T-cell (primary cell): ENCODE measurements at regions of chr3 and their contacts with region 1.

Region 1: DNA sequence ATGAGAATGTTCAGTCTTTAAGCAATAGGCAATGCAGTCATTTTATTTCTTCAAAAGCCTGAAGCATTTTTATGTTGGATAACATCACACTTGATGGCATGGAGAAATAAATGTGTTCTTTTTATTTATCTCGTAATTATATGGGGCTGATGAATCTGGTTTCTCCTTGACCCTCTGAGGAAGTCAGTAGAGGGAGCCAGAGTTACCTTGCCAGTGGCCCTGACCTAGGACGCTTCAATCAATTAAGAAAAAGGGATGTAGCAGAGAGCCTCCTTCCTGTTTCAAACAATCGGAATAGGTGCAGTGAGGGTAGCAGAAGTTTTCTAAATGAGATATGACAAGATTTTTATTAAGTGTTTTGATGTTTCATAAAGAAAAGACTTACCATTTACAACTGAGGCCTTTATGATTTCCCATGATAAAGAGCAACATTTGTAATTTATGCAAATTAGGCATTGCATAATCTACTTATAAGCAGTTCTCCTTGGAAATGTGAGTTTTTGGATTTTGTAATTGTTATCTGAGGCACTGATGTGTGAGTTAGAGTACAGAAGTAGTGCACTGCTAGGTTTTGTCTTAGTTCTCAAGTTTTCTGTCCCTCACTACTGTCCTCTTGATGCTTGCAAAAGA is 129.1 kb downstream of the RAP2B start:
- DNase-seq: peak in 1 of 35 experiments; percentile 50
- ATAC-seq: peak in 2 of 4 experiments; percentile 58 to 77
- H3K4me3 ChIP-seq: no peak overlapping the region
- H3K4me3 Mint-ChIP-seq: no peak overlapping the region
- H3K27ac ChIP-seq: no peak overlapping the region
- H3K27ac Mint-ChIP-seq: no peak overlapping the region
- H3K4me1 ChIP-seq: peaks cover 4 to 10% of the 10 kb centered on the region in 2 experiments
- H3K4me1 Mint-ChIP-seq: peaks cover 40 to 51% (median 45%) of the 10 kb centered on the region in 3 donors
- H3K27me3 ChIP-seq: no peaks in the 10 kb centered on the region
- H3K27me3 Mint-ChIP-seq: no peaks in the 10 kb centered on the region

Region 2: GRCh38 chr3:152969561-152970240 is 321.5 kb before region 1 on chr3:
- CTCF ChIA-PET with region 1: no interaction called
- POLR2A ChIA-PET with region 1: interaction called in 1 of 2 experiments, 12 read pairs
- DNase-seq: no peak
- ATAC-seq: no peak
- H3K4me3 ChIP-seq: no peak overlapping the region
- H3K4me3 Mint-ChIP-seq: no peak overlapping the region
- H3K27ac ChIP-seq: no peak overlapping the region
- H3K27ac Mint-ChIP-seq: no peak overlapping the region
- H3K4me1 ChIP-seq: no peaks in the 10 kb centered on the region
- H3K4me1 Mint-ChIP-seq: no peaks in the 10 kb centered on the region
- H3K27me3 ChIP-seq: no peaks in the 10 kb centered on the region
- H3K27me3 Mint-ChIP-seq: peaks cover 7 to 12% of the 10 kb centered on the region in 2 donors

Region 3: GRCh38 chr3:153161138-153161713 is 129.9 kb before region 1 on chr3:
- CTCF ChIA-PET with region 1: interaction called, 7 to 33 read pairs
- POLR2A ChIA-PET with region 1: no interaction called
- DNase-seq: peak; percentile 71 to 95 (median 90)
- ATAC-seq: peak; percentile 75 to 84 (median 80)
- H3K4me3 ChIP-seq: peak overlapping the region; percentile 70 to 88
- H3K4me3 Mint-ChIP-seq: peak overlapping the region; percentile 96 to 99 (median 98)
- H3K27ac ChIP-seq: peak overlapping the region; percentile 77
- H3K27ac Mint-ChIP-seq: peak overlapping the region; percentile 96
- H3K4me1 ChIP-seq: peaks cover 11 to 29% of the 10 kb centered on the region in 2 experiments
- H3K4me1 Mint-ChIP-seq: peaks cover 31 to 38% (median 37%) of the 10 kb centered on the region in 3 donors
- H3K27me3 ChIP-seq: no peaks in the 10 kb centered on the region
- H3K27me3 Mint-ChIP-seq: no peaks in the 10 kb centered on the region

Region 4: DNA sequence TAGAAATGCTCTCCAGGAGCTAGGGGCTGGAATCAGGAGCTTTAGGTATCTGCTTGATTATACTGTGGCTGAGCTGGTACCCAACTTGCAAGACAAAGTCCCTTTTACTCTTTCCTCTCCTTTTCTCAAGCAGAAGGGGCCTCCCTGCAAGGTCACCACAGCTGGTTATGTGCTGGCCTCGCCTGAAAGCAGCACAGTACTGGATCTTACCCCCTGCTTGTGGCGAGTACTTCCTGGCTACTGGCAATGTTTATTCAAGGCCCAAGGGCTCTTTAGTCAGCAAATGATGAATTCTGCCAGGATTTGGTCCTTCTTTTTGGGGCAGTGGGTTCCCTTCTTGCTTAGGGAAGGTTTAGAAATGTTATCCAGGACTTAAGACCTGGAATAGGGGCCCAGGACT is 105.4 kb after region 1 on chr3:
- CTCF ChIA-PET with region 1: no interaction called
- POLR2A ChIA-PET with region 1: no interaction called
- DNase-seq: no peak
- ATAC-seq: no peak
- H3K4me3 ChIP-seq: no peak overlapping the region
- H3K4me3 Mint-ChIP-seq: no peak overlapping the region
- H3K27ac ChIP-seq: no peak overlapping the region
- H3K27ac Mint-ChIP-seq: no peak overlapping the region
- H3K4me1 ChIP-seq: peaks cover 0 to 9% of the 10 kb centered on the region in 2 experiments
- H3K4me1 Mint-ChIP-seq: peaks cover 22 to 31% (median 25%) of the 10 kb centered on the region in 3 donors
- H3K27me3 ChIP-seq: peaks cover 0 to 3% of the 10 kb centered on the region in 2 experiments
- H3K27me3 Mint-ChIP-seq: no peaks in the 10 kb centered on the region